ENCODE measurements at regions of chr2 and their contacts with region 1.

Region 1: DNA sequence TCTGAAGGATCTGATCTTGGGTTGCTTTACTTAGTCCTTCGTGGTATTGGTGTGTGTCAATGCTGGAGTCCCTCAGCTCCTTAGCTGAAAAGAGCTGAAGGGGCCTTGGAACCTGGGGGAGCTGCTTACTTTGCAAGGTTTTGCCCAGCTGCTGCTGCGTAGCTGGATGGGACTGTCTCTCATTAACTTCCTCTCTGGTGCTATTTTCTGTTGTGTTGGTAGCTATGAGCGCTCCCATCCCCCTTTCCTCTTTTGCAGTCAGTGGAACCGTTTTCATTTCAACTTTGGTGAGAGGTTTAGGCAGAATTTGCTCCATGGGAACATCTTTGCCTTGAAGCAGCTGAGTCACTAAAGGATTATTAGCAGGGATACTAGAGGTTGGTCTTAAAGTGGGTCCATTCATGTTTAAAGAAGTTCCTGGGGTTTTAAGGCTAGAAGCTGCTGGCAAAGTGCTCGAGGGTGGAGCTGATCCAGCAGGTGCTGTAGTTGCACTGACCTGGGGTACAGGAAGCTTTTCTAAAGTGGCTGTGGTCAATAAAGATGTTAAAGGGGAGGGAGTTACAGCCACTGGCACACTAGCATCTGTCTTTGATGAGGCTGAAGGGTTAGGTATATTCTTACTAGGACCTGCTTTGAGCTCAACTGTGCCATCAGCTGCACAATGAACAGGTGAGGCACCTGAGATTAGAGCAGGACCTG is 69.9 kb upstream of the DTNB start:
- DNase-seq: peak; percentile 72
- H3K4me3 ChIP-seq: peak overlapping the region; percentile 23
- H3K27ac ChIP-seq: peak overlapping the region; percentile 72
- H3K4me1 ChIP-seq: peaks cover 32% of the 10 kb centered on the region
- CTCF ChIP-seq: no peak

Region 2: DNA sequence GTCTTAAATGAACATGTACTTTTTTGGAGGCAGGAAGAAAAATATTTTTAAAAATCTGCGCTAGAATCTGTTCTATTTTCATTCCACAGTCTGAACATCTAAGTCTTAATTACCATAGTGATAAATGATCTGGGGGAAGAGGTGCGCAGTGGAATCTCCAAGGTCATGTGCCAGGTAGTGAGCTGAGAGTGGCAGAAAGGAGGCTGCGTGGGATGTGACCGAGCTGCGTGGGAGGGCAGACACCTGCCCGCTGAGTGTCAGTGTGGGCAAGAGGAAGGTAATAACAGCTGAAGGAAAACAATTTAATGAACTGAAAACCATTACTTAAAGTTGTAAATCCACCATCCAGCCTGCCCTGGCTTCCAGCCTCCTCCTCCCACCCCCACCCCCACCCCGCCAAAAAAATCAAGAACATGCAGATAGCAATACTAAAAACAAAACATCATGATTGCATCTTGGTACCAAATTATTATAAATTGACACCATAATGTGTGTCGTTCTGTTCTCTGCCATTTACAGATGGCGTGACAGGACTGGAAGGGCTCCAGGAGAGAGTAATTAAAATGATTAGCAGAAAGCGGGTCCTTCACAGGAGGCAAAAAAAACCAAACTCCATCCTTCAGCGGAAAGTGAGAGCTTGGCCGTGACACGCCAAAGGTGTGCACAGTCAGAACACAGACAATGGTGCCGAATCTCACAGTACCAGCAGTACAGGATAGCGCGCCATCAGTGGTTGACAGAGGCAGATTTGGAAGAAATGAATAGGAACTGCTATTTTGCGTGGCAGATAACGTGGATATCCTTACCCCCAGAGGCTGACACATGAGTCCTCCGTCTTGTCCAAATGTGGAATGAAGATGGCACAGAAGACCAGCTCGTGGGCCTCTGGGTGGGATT is 58.5 kb before region 1 on chr2:
- CTCF ChIA-PET with region 1: no interaction called
- POLR2A ChIA-PET with region 1: no interaction called
- intact Hi-C with region 1: no loop called
- DNase-seq: no peak
- H3K4me3 ChIP-seq: no peak overlapping the region
- H3K27ac ChIP-seq: no peak overlapping the region
- H3K4me1 ChIP-seq: no peaks in the 10 kb centered on the region
- CTCF ChIP-seq: no peak

Region 3: GRCh38 chr2:26401739-26402541 is 658.7 kb after region 1 on chr2 and contains the start of gene DRC1:
- CTCF ChIA-PET with region 1: no interaction called
- POLR2A ChIA-PET with region 1: interaction called, 14 read pairs
- intact Hi-C with region 1: no loop called
- DNase-seq: no peak
- H3K4me3 ChIP-seq: no peak within 1 kb of the TSS
- H3K27ac ChIP-seq: no peak within 1 kb of the TSS
- H3K4me1 ChIP-seq: no peaks in the 10 kb centered on the region
- CTCF ChIP-seq: no peak
- total RNA-seq, gene DRC1: not detected in 2 replicates

Region 4: GRCh38 chr2:26530696-26531095 is 787.4 kb after region 1 on chr2:
- CTCF ChIA-PET with region 1: no interaction called
- POLR2A ChIA-PET with region 1: no interaction called
- intact Hi-C with region 1: no loop called
- DNase-seq: no peak
- H3K4me3 ChIP-seq: no peak overlapping the region
- H3K27ac ChIP-seq: no peak overlapping the region
- H3K4me1 ChIP-seq: no peaks in the 10 kb centered on the region
- CTCF ChIP-seq: no peak